Ovary (tissue), 10 donors: ENCODE measurements at regions of chr12 and their contacts with region 1.

Region 1: DNA sequence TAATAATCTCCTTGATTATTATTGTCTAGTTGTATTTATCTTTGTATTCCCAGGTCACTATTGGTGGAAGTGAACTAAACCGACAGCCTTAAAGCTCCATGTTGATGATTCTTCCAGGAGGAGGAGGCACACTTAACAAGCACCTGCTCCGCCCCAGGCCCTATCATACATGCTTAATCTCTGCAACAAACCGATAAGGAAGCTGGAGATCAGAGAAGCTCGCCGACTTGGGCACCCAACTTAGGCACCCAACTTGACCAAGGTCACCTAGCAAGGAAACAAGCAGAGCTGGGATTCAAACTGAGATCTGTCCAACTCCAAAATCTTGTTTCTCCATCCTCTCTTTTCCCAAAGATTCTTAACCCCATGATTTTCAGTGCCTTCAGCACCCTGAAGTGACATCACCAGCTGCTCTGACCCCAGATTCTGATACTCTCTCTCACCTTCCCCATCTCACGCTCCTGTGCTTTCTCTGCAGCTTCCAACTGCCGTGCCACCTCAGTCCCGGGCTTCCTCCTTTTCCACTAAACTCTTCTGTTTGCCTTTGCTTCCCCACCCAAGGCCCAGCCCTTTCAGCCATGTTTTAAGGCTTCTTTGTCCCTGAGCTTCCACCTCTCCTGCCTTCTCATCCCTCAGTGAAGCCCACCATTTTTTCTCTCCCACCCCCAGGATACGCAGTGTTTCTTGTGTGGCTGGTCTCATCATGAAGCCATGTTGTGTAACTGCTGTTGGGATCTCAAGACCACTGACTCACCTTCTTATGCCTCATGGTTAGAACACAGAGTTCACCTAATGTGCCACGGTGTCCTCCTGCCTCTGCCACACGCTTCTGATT is 6.6 kb upstream of the KRT18 start:
- DNase-seq: no peak
- H3K4me3 ChIP-seq: no peak overlapping the region
- H3K27ac ChIP-seq: no peak overlapping the region
- H3K4me1 ChIP-seq: no peaks in the 10 kb centered on the region
- H3K27me3 ChIP-seq: no peaks in the 10 kb centered on the region
- CTCF ChIP-seq: no peak
- EP300 ChIP-seq: no peak
- POLR2A ChIP-seq: no peak

Region 2: GRCh38 chr12:52783563-52784316 is 158.5 kb before region 1 on chr12:
- intact Hi-C with region 1: loop called in 1 of 4 experiments (anchors 5 kb)
- DNase-seq: no peak
- H3K4me3 ChIP-seq: no peak overlapping the region
- H3K27ac ChIP-seq: no peak overlapping the region
- H3K4me1 ChIP-seq: no peaks in the 10 kb centered on the region
- H3K27me3 ChIP-seq: no peaks in the 10 kb centered on the region
- CTCF ChIP-seq: no peak
- EP300 ChIP-seq: no peak
- POLR2A ChIP-seq: no peak